B cell (primary cell): ENCODE measurements at regions of chr12 and their contacts with region 1.

Region 1: DNA sequence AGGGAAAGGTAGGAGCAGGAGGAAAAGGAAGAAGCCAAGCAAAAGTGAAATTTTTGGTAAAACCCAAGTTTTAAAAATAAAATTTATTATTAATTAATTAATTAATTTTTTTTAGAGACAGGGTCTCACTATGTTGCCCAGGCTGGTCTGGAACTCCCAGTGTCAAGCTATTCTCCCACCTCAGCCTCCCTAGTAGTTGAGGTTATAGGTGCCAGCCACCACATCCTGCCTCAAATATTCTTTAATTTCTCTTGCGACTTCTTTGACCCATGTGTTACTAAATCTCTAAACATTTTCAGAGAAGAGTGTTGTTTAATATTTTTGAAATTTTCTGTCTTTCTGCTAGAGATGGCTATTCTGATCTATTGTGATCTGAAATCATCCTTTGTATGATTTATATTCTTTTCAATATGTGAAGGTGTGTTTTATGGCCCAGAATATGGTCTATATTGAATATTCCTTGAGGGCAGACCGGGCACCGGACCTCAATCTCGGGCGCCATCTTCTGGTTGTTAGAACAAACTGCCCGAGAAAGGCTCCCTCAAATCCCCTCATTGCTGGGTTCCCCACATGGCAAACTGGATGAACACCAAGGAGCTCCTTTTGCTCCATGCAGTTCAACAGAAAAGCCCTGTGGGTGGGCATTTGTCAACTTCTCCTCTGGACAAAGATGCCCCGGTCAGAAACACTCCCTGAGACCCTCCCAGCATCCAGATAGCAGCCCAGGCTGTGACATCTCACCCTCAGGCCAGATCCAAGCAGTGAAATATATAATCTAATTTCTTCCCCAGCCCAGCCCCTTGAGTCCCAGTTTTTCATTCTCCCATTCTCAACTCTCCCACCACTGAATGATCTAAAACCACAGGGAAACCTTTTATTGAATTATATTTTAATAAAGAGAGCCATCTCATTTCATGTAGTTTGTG is 110.5 kb downstream of the ASCL4 start:
- DNase-seq: peak; percentile 77
- ATAC-seq: peak; percentile 78
- H3K4me3 ChIP-seq: no peak overlapping the region
- H3K4me3 Mint-ChIP-seq: no peak overlapping the region
- H3K27ac ChIP-seq: no peak overlapping the region
- H3K27ac Mint-ChIP-seq: no peak overlapping the region
- H3K4me1 ChIP-seq: no peaks in the 10 kb centered on the region
- H3K4me1 Mint-ChIP-seq: peaks cover 1% of the 10 kb centered on the region
- H3K27me3 ChIP-seq: peaks cover 0 to 7% (median 0%) of the 10 kb centered on the region in 4 experiments
- H3K27me3 Mint-ChIP-seq: peaks cover 14% of the 10 kb centered on the region
- CTCF ChIP-seq: peak; percentile 86

Region 2: GRCh38 chr12:107670999-107671643 is 213.9 kb before region 1 on chr12:
- CTCF ChIA-PET with region 1: interaction called, 324 read pairs
- POLR2A ChIA-PET with region 1: no interaction called
- intact Hi-C with region 1: no loop called
- DNase-seq: peak; percentile 36
- ATAC-seq: peak; percentile 31
- H3K4me3 ChIP-seq: no peak overlapping the region
- H3K4me3 Mint-ChIP-seq: no peak overlapping the region
- H3K27ac ChIP-seq: no peak overlapping the region
- H3K27ac Mint-ChIP-seq: no peak overlapping the region
- H3K4me1 ChIP-seq: no peaks in the 10 kb centered on the region
- H3K4me1 Mint-ChIP-seq: peaks cover 3% of the 10 kb centered on the region
- H3K27me3 ChIP-seq: peaks cover 0 to 14% (median 0%) of the 10 kb centered on the region in 4 experiments
- H3K27me3 Mint-ChIP-seq: peaks cover 32% of the 10 kb centered on the region
- CTCF ChIP-seq: peak; percentile 45

Region 3: GRCh38 chr12:107702106-107702505 is 182.9 kb before region 1 on chr12:
- CTCF ChIA-PET with region 1: interaction called, 20 read pairs
- POLR2A ChIA-PET with region 1: no interaction called
- intact Hi-C with region 1: no loop called
- DNase-seq: no peak
- ATAC-seq: peak; percentile 31
- H3K4me3 ChIP-seq: no peak overlapping the region
- H3K4me3 Mint-ChIP-seq: peak overlapping the region; percentile 57
- H3K27ac ChIP-seq: peak overlapping the region; percentile 67 to 74
- H3K27ac Mint-ChIP-seq: peak overlapping the region; percentile 83
- H3K4me1 ChIP-seq: peaks cover 11 to 19% of the 10 kb centered on the region in 2 donors
- H3K4me1 Mint-ChIP-seq: peaks cover 24% of the 10 kb centered on the region
- H3K27me3 ChIP-seq: no peaks in the 10 kb centered on the region
- H3K27me3 Mint-ChIP-seq: no peaks in the 10 kb centered on the region
- CTCF ChIP-seq: no peak